Activated naive CD4-positive, alpha-beta T cell treated with anti-CD3 and anti-CD28 coated beads, Interleukin-2, amount 10 ng/mL, durations not matched to agents 7 days and 5 days (primary cell): ENCODE measurements at regions of chr22 and their contacts with region 1.

Region 1: GRCh38 chr22:24803011-24803542 is 2.9 kb upstream of the SGSM1 start:
- DNase-seq: peak; percentile 73
- H3K4me3 Mint-ChIP-seq: no peak overlapping the region
- H3K27ac Mint-ChIP-seq: no peak overlapping the region
- H3K4me1 Mint-ChIP-seq: peaks cover 21% of the 10 kb centered on the region
- H3K27me3 Mint-ChIP-seq: peaks cover 17% of the 10 kb centered on the region

Region 2: DNA sequence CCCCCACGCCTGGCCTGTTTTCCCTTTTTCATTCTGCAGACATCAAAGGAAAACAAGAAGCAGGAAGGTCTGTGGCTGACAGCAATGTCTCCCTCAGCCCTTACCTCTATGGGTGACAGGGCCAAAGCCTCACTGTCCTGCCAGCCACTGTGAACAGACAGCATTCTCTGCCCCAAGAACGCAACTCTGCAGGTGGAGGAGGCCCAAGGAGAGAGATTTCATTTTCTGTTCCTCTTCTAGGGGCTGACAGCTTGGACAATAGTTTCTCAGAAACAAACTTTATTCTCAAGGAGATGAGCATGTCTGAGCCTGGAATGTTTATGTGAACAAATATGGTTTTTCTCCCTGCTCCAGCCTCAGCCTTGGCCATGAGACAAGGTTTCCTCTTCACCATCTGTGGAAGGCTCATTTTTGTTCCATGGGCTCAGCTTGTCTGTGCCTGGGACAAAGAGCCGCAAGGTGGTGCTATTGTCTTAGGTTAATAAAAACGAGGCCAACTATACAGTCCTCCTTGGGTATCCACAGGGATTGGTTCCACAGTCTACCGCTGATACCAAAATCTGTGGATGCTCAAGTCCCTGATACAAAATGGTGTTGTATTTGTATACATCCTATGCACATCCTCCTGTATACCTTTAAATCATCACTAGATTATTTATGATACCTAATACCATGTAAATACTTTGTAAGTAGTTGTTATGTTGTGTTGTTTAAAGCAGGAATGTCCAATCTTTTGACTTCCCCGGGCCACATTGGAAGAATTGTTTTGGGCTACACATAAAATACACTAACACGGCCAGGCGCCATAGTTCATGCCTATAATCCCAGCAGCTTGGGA is 34.3 kb before region 1 on chr22:
- CTCF ChIA-PET with region 1: interaction called, 17 read pairs
- DNase-seq: peak; percentile 63
- H3K4me3 Mint-ChIP-seq: no peak overlapping the region
- H3K27ac Mint-ChIP-seq: no peak overlapping the region
- H3K4me1 Mint-ChIP-seq: peaks cover 3% of the 10 kb centered on the region
- H3K27me3 Mint-ChIP-seq: peaks cover 32% of the 10 kb centered on the region

Region 3: GRCh38 chr22:24812950-24813775 is 10.1 kb after region 1 on chr22:
- CTCF ChIA-PET with region 1: interaction called, 20 read pairs
- DNase-seq: no peak
- H3K4me3 Mint-ChIP-seq: no peak overlapping the region
- H3K27ac Mint-ChIP-seq: no peak overlapping the region
- H3K4me1 Mint-ChIP-seq: no peaks in the 10 kb centered on the region
- H3K27me3 Mint-ChIP-seq: peaks cover 22% of the 10 kb centered on the region

Region 4: GRCh38 chr22:24845041-24845898 is 42.2 kb after region 1 on chr22:
- CTCF ChIA-PET with region 1: interaction called, 10 read pairs
- DNase-seq: no peak
- H3K4me3 Mint-ChIP-seq: no peak overlapping the region
- H3K27ac Mint-ChIP-seq: peak overlapping the region; percentile 15
- H3K4me1 Mint-ChIP-seq: peaks cover 4% of the 10 kb centered on the region
- H3K27me3 Mint-ChIP-seq: peaks cover 19% of the 10 kb centered on the region